ENCODE measurements at regions of chr1 and their contacts with region 1.

Region 1: DNA sequence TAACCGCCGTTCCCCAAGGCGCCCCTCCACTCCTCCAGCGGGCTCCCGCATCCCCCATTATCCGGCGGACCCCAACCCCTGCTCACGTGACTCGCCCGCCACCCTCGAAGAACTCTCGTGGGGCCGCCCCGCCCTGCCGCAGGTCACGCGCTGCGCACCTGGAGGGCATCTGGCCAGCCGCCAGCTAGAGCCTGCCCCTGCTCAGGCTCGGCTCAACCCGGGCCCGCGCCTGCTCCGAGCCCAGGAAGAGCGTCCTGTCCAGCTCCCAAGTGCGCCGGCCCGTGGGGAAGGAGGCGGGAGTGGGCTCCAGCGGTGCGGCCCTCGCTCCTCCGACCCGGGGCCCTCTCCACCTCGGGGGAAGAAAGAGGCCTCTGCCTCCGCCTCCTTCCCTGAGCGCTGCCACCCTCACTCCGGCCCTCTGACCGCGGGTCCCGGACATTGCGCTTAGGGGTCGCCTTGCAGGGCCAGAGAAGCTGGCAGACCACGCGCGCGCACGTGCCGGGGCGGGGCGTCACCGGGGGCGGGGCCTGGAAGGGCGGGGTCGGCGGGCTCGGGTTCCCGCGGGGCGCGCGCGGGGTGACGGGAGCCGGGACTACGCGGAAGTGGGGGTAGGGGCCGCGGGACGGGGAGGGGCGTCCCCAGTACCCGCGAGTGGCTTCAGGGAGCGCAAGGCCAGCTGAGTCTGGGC is 28.4 kb downstream of the HMGN2 start:
- DNase-seq: peak; percentile 76 to 97 (median 86)
- ATAC-seq: peak; percentile 89
- H3K4me3 ChIP-seq: peak overlapping the region; percentile 95
- H3K4me3 Mint-ChIP-seq: peak overlapping the region; percentile 67 to 91 (median 88)
- H3K27ac ChIP-seq: peak overlapping the region; percentile 90
- H3K27ac Mint-ChIP-seq: peak overlapping the region; percentile 67 to 95 (median 91)
- H3K4me1 ChIP-seq: peaks cover 16% of the 10 kb centered on the region in 2 donors
- H3K4me1 Mint-ChIP-seq: peaks cover 1 to 31% (median 11%) of the 10 kb centered on the region in 7 donors
- H3K27me3 ChIP-seq: no peaks in the 10 kb centered on the region
- H3K27me3 Mint-ChIP-seq: no peaks in the 10 kb centered on the region

Region 2: GRCh38 chr1:26431979-26432695 is 68.5 kb before region 1 on chr1 and contains the start of gene DHDDS:
- CTCF ChIA-PET with region 1: no interaction called
- POLR2A ChIA-PET with region 1: interaction called, 4 read pairs
- intact Hi-C with region 1: loop called (anchors 1 kb)
- DNase-seq: peak; percentile 95 to 98 (median 97)
- ATAC-seq: peak; percentile 99
- H3K4me3 ChIP-seq: peak within 1 kb of the TSS; percentile 88
- H3K4me3 Mint-ChIP-seq: peak within 1 kb of the TSS; percentile 92 to 99 (median 96)
- H3K27ac ChIP-seq: peak within 1 kb of the TSS; percentile 76
- H3K27ac Mint-ChIP-seq: peak within 1 kb of the TSS; percentile 90 to 99 (median 93)
- H3K4me1 ChIP-seq: peaks cover 11 to 15% of the 10 kb centered on the region in 2 donors
- H3K4me1 Mint-ChIP-seq: peaks cover 14 to 26% (median 22%) of the 10 kb centered on the region in 7 donors
- H3K27me3 ChIP-seq: no peaks in the 10 kb centered on the region
- H3K27me3 Mint-ChIP-seq: peaks cover 0 to 15% (median 0%) of the 10 kb centered on the region in 5 donors
- total RNA-seq, gene DHDDS: 28.1 to 58.9 (median 37.7) TPM

Region 3: GRCh38 chr1:26529655-26530409 is 29.2 kb after region 1 on chr1 and contains the start of gene RPS6KA1:
- CTCF ChIA-PET with region 1: interaction called, 4 read pairs
- POLR2A ChIA-PET with region 1: interaction called, 8 read pairs
- intact Hi-C with region 1: loop called (anchors 1 to 2 kb)
- DNase-seq: peak; percentile 28 to 81 (median 57)
- ATAC-seq: peak; percentile 93
- H3K4me3 ChIP-seq: peak within 1 kb of the TSS; percentile 48
- H3K4me3 Mint-ChIP-seq: peak within 1 kb of the TSS; percentile 80 to 95 (median 90)
- H3K27ac ChIP-seq: peak within 1 kb of the TSS; percentile 75
- H3K27ac Mint-ChIP-seq: peak within 1 kb of the TSS; percentile 69 to 96 (median 85)
- H3K4me1 ChIP-seq: peaks cover 16 to 20% of the 10 kb centered on the region in 2 donors
- H3K4me1 Mint-ChIP-seq: peaks cover 16 to 35% (median 27%) of the 10 kb centered on the region in 7 donors
- H3K27me3 ChIP-seq: no peaks in the 10 kb centered on the region
- H3K27me3 Mint-ChIP-seq: peaks cover 0 to 7% (median 0%) of the 10 kb centered on the region in 5 donors
- total RNA-seq, gene RPS6KA1: 53.8 to 205 (median 97.6) TPM

Region 4: DNA sequence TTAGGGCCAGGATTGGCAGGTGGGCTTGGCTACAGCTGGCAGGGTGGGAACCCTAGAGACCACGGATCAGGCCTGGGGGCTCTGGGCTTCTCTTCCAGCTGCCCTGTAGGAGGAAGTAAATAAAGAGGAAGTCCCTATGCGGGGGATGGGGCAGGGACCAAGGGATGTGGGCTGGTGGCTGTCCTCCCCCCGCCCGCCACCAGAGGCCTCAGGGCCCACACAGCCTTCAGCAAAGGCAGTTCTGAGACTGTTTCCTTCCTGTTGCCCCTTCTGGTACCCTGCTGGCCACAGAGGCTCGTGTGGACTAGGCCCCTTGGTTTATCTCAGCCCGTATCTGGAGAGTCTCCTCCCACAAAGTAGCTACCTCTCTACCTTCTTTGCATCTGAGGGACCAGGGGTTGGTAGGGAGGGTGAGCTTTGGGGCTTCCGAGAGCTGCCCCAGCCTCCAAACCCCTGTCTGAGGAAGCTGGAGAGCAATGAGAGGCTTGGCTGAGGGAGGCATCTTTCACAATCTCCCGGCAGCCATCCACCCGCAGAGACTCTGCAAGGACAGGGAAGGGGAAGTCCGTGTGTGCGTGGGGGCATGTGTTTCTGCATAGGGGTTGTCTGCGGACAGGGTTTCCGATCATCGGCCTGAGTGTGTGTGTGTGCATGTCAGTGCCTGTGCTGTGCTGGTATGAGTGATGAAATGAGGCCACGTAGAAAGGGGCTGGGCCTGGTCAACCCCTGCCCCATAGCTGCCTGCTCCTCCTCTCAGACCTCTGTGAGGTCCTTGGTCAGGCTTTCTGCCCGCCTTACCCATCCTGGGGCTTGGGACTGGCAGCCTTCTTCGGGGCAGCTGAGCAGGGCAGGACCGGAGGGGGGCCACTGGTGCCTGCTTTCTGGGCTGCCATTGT is 41.4 kb after region 1 on chr1:
- CTCF ChIA-PET with region 1: interaction called, 19 read pairs
- POLR2A ChIA-PET with region 1: interaction called, 34 read pairs
- intact Hi-C with region 1: loop called (anchors 1 kb)
- DNase-seq: peak; percentile 56 to 84 (median 66)
- ATAC-seq: peak; percentile 72
- H3K4me3 ChIP-seq: peak overlapping the region; percentile 33
- H3K4me3 Mint-ChIP-seq: peak overlapping the region; percentile 75 to 91 (median 84)
- H3K27ac ChIP-seq: peak overlapping the region; percentile 71
- H3K27ac Mint-ChIP-seq: peak overlapping the region; percentile 82 to 99 (median 96)
- H3K4me1 ChIP-seq: peaks cover 77 to 89% of the 10 kb centered on the region in 2 donors
- H3K4me1 Mint-ChIP-seq: peaks cover 80 to 94% (median 83%) of the 10 kb centered on the region in 7 donors
- H3K27me3 ChIP-seq: no peaks in the 10 kb centered on the region
- H3K27me3 Mint-ChIP-seq: no peaks in the 10 kb centered on the region

Region 5: GRCh38 chr1:26723013-26723991 is 222.7 kb after region 1 on chr1:
- CTCF ChIA-PET with region 1: no interaction called
- POLR2A ChIA-PET with region 1: no interaction called
- intact Hi-C with region 1: no loop called
- DNase-seq: peak in 6 of 9 donors; percentile 18 to 77 (median 36)
- ATAC-seq: peak; percentile 80
- H3K4me3 ChIP-seq: peak overlapping the region; percentile 37
- H3K4me3 Mint-ChIP-seq: peak overlapping the region; percentile 64 to 89 (median 81)
- H3K27ac ChIP-seq: peak overlapping the region; percentile 58
- H3K27ac Mint-ChIP-seq: peak overlapping the region; percentile 8 to 92 (median 77)
- H3K4me1 ChIP-seq: peaks cover 77 to 81% of the 10 kb centered on the region in 2 donors
- H3K4me1 Mint-ChIP-seq: peaks cover 80 to 93% (median 89%) of the 10 kb centered on the region in 7 donors
- H3K27me3 ChIP-seq: no peaks in the 10 kb centered on the region
- H3K27me3 Mint-ChIP-seq: no peaks in the 10 kb centered on the region

Region 6: DNA sequence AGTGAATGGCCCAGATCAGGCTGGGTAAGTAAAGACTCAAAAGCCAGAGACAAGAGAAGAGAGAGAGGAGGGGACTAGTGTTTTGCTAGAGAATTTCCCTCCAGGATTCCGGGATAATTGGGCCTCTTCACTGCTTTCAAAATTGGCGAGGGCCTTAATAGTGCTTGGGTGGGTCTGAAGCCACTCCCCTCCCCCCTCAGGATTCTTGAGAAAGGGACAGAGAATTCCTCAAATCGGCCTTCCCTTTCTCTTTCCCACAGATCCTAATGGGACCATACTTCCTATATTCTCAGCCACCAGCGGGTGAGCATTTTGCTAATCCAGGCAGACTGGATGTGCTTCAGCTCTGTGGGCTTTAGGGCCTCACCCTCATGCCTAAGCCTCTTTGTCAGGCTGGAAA is 374.3 kb after region 1 on chr1:
- CTCF ChIA-PET with region 1: interaction called, 3 read pairs
- POLR2A ChIA-PET with region 1: no interaction called
- intact Hi-C with region 1: loop called in 1 of 2 experiments (anchors 5 kb)
- DNase-seq: no peak
- ATAC-seq: no peak
- H3K4me3 ChIP-seq: no peak overlapping the region
- H3K4me3 Mint-ChIP-seq: no peak overlapping the region
- H3K27ac ChIP-seq: no peak overlapping the region
- H3K27ac Mint-ChIP-seq: no peak overlapping the region
- H3K4me1 ChIP-seq: no peaks in the 10 kb centered on the region
- H3K4me1 Mint-ChIP-seq: peaks cover 0 to 3% (median 0%) of the 10 kb centered on the region in 7 donors
- H3K27me3 ChIP-seq: no peaks in the 10 kb centered on the region
- H3K27me3 Mint-ChIP-seq: no peaks in the 10 kb centered on the region

Measured in naive thymus-derived CD4-positive, alpha-beta T cell (primary cell).